ENCODE measurements at regions of chr19 and their contacts with region 1.

Region 1: GRCh38 chr19:34963573-34964409 is at the start of gene ZNF792:
- DNase-seq: peak in 8 of 10 donors; percentile 32 to 74 (median 45)
- ATAC-seq: peak; percentile 64 to 69
- H3K4me3 Mint-ChIP-seq: peak within 1 kb of the TSS; percentile 93 to 97 (median 96)
- H3K27ac Mint-ChIP-seq: peak within 1 kb of the TSS; percentile 87 to 97 (median 93)
- H3K4me1 Mint-ChIP-seq: peaks cover 21 to 29% (median 26%) of the 10 kb centered on the region in 4 donors
- H3K27me3 Mint-ChIP-seq: no peaks in the 10 kb centered on the region
- polyA plus RNA-seq, gene ZNF792: 9.7 to 18.7 (median 16.0) TPM

Region 2: DNA sequence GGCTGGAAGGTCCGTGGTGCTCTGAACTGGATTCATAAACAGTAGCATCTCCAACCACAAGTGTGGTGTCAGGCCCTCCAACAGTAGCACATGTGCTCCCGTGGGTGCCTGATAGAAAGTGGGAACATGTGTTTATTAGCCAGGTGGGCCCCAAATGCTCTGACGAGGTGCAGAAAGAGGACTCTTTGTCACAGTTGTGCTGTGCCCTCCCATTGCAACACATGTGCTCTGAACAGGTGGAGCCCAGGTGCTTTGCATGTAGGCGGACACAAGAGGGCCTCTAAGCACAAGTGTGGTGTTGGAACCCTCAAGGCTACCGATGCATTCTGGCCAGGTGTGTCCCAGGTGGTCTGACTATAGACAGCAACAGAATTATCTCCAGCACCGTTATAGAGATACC is 112.4 kb before region 1 on chr19:
- POLR2A ChIA-PET with region 1: no interaction called
- DNase-seq: peak in 1 of 10 donors; percentile 23
- ATAC-seq: peak; percentile 58 to 68
- H3K4me3 Mint-ChIP-seq: no peak overlapping the region
- H3K27ac Mint-ChIP-seq: peak overlapping the region in 4 of 10 donors; percentile 5 to 70 (median 52)
- H3K4me1 Mint-ChIP-seq: peaks cover 36 to 68% (median 52%) of the 10 kb centered on the region in 4 donors
- H3K27me3 Mint-ChIP-seq: no peaks in the 10 kb centered on the region

Region 3: DNA sequence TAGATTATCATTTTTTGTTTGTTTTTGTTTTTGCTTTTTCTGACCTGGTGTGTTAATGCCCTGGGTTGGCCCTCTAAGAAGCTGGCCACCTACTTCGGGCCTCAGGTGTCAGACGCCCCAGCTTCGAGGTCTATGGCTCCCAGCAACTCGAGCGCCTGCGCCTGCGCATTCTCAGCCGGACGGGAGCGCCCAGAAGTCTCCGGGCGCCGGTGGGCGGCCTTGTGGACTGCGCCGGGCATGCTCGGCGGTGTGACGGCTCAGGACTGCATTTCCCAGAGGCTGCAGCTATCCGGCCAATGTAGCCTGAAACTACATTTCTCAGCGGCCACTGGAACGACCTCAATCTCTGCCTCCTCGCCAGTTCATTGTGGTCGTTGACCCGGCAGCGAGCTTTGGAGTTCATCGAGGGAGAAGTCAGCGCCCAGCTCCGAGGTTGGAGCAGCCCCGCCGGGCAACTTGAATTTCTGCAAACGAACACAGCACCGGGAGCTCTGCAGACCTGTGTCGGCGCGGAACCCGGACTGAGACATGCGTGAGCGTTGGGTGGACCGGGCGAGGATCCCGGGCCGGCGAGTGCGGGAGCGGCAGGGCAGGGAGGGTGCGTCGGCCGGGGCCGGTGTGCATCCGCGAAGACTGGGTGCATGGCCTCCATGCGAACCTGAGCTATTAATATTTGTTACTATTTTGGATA is 37.0 kb before region 1 on chr19 and contains the start of gene ZNF30:
- POLR2A ChIA-PET with region 1: interaction called, 10 read pairs
- DNase-seq: peak; percentile 52 to 89 (median 77)
- ATAC-seq: peak; percentile 99
- H3K4me3 Mint-ChIP-seq: peak within 1 kb of the TSS; percentile 89 to 94 (median 92)
- H3K27ac Mint-ChIP-seq: peak within 1 kb of the TSS; percentile 52 to 90 (median 81)
- H3K4me1 Mint-ChIP-seq: peaks cover 4 to 36% (median 21%) of the 10 kb centered on the region in 4 donors
- H3K27me3 Mint-ChIP-seq: peaks cover 0 to 2% (median 0%) of the 10 kb centered on the region in 5 donors
- polyA plus RNA-seq, gene ZNF30: 4.9 to 8.0 (median 5.8) TPM

Region 4: GRCh38 chr19:34974646-34975045 is 10.9 kb after region 1 on chr19:
- POLR2A ChIA-PET with region 1: interaction called, 15 read pairs
- DNase-seq: no peak
- ATAC-seq: no peak
- H3K4me3 Mint-ChIP-seq: peak overlapping the region in 7 of 10 donors; percentile 8 to 90 (median 75)
- H3K27ac Mint-ChIP-seq: peak overlapping the region in 9 of 10 donors; percentile 69 to 95 (median 94)
- H3K4me1 Mint-ChIP-seq: peaks cover 17 to 52% (median 33%) of the 10 kb centered on the region in 4 donors
- H3K27me3 Mint-ChIP-seq: peaks cover 0 to 2% (median 0%) of the 10 kb centered on the region in 5 donors

Region 5: DNA sequence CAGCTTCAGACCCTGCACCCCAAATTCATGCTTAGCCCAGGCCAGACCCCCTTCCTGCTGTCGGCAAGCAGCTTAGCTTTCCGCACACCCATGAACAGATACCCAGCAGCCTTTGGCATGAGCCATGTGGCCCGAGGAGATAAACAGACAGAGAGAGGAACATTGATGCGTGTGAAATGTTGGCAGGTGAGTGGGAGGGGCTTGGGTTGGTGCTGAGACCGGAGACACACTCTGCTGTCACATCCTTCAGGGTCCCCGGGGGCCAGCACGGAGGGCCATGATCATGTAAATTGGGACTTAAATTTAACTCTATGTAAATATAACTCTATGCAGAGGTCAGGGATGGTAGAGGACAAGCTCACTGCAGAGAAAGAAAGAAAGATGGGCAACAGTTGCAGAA is 366.7 kb after region 1 on chr19:
- POLR2A ChIA-PET with region 1: no interaction called
- DNase-seq: peak in 1 of 10 donors; percentile 45
- ATAC-seq: peak in 1 of 2 donors; percentile 56
- H3K4me3 Mint-ChIP-seq: peak overlapping the region in 2 of 10 donors; percentile 56 to 92
- H3K27ac Mint-ChIP-seq: peak overlapping the region in 3 of 10 donors; percentile 7 to 82 (median 37)
- H3K4me1 Mint-ChIP-seq: peaks cover 12 to 51% (median 17%) of the 10 kb centered on the region in 4 donors
- H3K27me3 Mint-ChIP-seq: peaks cover 4 to 18% (median 10%) of the 10 kb centered on the region in 5 donors

Measured in naive thymus-derived CD8-positive, alpha-beta T cell (primary cell).